Activated T-helper 2 cell treated with anti-CD3 and anti-CD28 coated beads, Interferon-gamma antibody, Interleukin-2, Interleukin-4, amounts not matched to agents 10 μg/mL and 5 μg/mL and 100 μg/mL, durations not matched to agents 14 hours and 24 hours and 36 hours (primary cell): ENCODE measurements at regions of chr1 and their contacts with region 1.

Region 1: GRCh38 chr1:54810100-54810942 is 9.2 kb upstream of the TTC22 start:
- DNase-seq: peak; percentile 51
- H3K4me3 Mint-ChIP-seq: no peak overlapping the region
- H3K27ac Mint-ChIP-seq: no peak overlapping the region
- H3K4me1 Mint-ChIP-seq: peaks cover 12% of the 10 kb centered on the region
- H3K27me3 Mint-ChIP-seq: no peaks in the 10 kb centered on the region

Region 2: GRCh38 chr1:54671985-54672608 is 138.2 kb before region 1 on chr1:
- intact Hi-C with region 1: loop called (anchors 1 kb)
- DNase-seq: peak; percentile 50
- H3K4me3 Mint-ChIP-seq: no peak overlapping the region
- H3K27ac Mint-ChIP-seq: no peak overlapping the region
- H3K4me1 Mint-ChIP-seq: peaks cover 6% of the 10 kb centered on the region
- H3K27me3 Mint-ChIP-seq: no peaks in the 10 kb centered on the region